ENCODE measurements at regions of chr19 and their contacts with region 1.

Region 1: DNA sequence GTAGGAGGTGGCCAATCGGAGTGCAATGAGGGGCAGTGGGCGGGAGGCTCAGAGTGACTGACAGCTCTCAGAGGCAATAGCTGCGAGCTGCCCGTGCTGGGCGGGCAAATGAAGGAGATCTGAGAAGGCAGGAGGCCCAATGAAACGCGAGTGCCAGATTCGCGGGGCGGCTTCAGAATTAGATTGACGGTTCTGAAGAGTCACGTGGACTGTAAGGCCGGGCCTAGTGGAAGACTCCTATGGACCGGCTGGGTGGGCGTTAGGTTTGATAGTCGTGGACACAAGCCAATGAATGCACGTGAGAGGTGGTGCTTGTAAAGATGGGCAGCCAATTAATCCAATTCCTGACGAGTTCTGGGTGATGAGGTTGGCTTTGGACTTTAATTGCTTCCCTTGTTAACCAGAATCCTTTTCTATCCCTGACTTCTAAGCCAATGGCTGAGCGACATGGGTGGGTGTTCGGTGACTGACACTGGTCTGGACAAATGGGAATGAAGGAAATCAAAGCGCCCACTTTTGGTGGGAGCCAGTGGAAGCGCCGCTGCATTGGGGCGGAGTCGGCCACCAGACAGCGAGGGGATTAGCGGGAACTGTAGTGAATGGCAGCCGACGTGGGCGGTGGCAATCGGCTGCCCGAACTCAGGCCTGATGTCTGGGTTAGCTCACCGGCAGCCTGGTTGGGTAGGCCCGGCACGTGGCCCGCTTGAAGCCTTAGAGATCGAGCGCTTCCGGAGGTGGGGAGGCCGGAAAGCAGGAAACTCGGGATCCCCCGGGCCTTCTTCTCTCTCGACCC is 524 bp upstream of the KHSRP start:
- DNase-seq: peak; percentile 99 to 100
- H3K4me3 ChIP-seq: peak overlapping the region; percentile 23
- H3K4me3 Mint-ChIP-seq: peak overlapping the region; percentile 77
- H3K27ac Mint-ChIP-seq: peak overlapping the region; percentile 95
- H3K4me1 ChIP-seq: peaks cover 20% of the 10 kb centered on the region
- H3K4me1 Mint-ChIP-seq: peaks cover 6% of the 10 kb centered on the region
- H3K27me3 ChIP-seq: no peaks in the 10 kb centered on the region
- H3K27me3 Mint-ChIP-seq: no peaks in the 10 kb centered on the region
- CTCF ChIP-seq: no peak

Region 2: DNA sequence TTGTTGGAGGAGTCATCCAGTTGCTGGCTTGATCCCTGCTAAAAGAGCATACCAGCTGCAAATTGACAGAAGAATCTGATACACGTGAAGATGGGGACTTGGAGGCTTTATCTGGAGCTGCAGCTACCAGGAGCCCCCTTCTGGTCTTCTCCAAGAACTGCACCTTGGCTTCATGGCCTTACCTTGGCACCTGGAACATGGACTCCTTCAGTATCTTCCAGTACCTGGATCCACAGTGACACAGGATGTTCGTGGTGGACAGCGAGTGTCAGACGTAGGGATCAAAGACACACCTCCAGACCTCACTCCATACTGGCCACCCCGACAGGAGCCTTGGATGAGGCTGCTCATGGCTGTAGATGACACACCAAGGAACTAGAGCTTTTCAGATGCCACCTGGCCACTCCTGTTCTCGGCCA is 299.6 kb before region 1 on chr19:
- CTCF ChIA-PET with region 1: interaction called, 5 read pairs
- POLR2A ChIA-PET with region 1: interaction called, 17 read pairs
- intact Hi-C with region 1: no loop called
- DNase-seq: peak; percentile 74 to 76
- H3K4me3 ChIP-seq: no peak overlapping the region
- H3K4me3 Mint-ChIP-seq: no peak overlapping the region
- H3K27ac Mint-ChIP-seq: no peak overlapping the region
- H3K4me1 ChIP-seq: no peaks in the 10 kb centered on the region
- H3K4me1 Mint-ChIP-seq: no peaks in the 10 kb centered on the region
- H3K27me3 ChIP-seq: no peaks in the 10 kb centered on the region
- H3K27me3 Mint-ChIP-seq: no peaks in the 10 kb centered on the region
- CTCF ChIP-seq: peak; percentile 90 to 92

Region 3: GRCh38 chr19:6340493-6341201 is 84.5 kb before region 1 on chr19:
- CTCF ChIA-PET with region 1: no interaction called
- POLR2A ChIA-PET with region 1: no interaction called
- intact Hi-C with region 1: no loop called
- DNase-seq: no peak
- H3K4me3 ChIP-seq: no peak overlapping the region
- H3K4me3 Mint-ChIP-seq: no peak overlapping the region
- H3K27ac Mint-ChIP-seq: no peak overlapping the region
- H3K4me1 ChIP-seq: no peaks in the 10 kb centered on the region
- H3K4me1 Mint-ChIP-seq: no peaks in the 10 kb centered on the region
- H3K27me3 ChIP-seq: no peaks in the 10 kb centered on the region
- H3K27me3 Mint-ChIP-seq: peaks cover 2% of the 10 kb centered on the region
- CTCF ChIP-seq: peak in 1 of 2 experiments; percentile 32

Region 4: DNA sequence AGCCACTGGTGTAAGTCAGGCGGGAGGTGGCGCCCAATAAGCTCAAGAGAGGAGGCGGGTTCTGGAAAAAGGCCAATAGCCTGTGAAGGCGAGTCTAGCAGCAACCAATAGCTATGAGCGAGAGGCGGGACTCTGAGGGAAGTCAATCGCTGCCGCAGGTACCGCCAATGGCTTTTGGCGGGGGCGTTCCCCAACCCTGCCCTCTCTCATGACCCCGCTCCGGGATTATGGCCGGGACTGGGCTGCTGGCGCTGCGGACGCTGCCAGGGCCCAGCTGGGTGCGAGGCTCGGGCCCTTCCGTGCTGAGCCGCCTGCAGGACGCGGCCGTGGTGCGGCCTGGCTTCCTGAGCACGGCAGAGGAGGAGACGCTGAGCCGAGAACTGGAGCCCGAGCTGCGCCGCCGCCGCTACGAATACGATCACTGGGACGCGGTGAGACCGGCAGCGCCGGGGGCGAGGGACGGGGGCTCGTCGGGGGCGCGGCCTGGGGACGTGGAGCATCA is 52.5 kb before region 1 on chr19 and contains the start of gene ALKBH7:
- CTCF ChIA-PET with region 1: interaction called, 4 read pairs
- POLR2A ChIA-PET with region 1: interaction called, 27 read pairs
- intact Hi-C with region 1: loop called (anchors 1 kb)
- DNase-seq: peak; percentile 97 to 99
- H3K4me3 ChIP-seq: peak within 1 kb of the TSS; percentile 97
- H3K4me3 Mint-ChIP-seq: peak within 1 kb of the TSS; percentile 96
- H3K27ac Mint-ChIP-seq: peak within 1 kb of the TSS; percentile 99
- H3K4me1 ChIP-seq: peaks cover 17% of the 10 kb centered on the region
- H3K4me1 Mint-ChIP-seq: peaks cover 6% of the 10 kb centered on the region
- H3K27me3 ChIP-seq: no peaks in the 10 kb centered on the region
- H3K27me3 Mint-ChIP-seq: no peaks in the 10 kb centered on the region
- CTCF ChIP-seq: no peak
- total RNA-seq, gene ALKBH7: 55.5 and 70.0 TPM in 2 replicates

Region 5: DNA sequence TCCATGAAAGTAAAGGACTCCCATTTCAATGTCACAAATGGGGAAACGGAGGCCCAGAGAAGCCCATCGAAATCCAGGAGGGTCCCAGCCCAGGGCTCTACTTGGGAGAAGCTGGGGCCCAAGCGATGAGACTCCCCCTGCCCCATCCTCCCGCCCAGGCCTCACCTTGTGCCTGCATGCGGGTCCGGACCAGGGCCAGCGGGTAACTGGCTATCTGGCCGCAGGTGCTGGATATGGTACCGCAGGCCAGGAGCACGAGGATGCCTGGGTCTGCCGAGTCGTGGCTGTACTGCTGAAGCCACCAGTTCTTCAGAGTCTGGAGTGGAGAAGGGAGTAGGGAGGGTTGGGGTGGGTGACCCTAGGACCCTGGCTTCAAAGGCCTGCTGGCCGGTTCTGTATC is 18.9 kb after region 1 on chr19:
- CTCF ChIA-PET with region 1: no interaction called
- POLR2A ChIA-PET with region 1: no interaction called
- intact Hi-C with region 1: no loop called
- DNase-seq: no peak
- H3K4me3 ChIP-seq: no peak overlapping the region
- H3K4me3 Mint-ChIP-seq: no peak overlapping the region
- H3K27ac Mint-ChIP-seq: no peak overlapping the region
- H3K4me1 ChIP-seq: no peaks in the 10 kb centered on the region
- H3K4me1 Mint-ChIP-seq: no peaks in the 10 kb centered on the region
- H3K27me3 ChIP-seq: no peaks in the 10 kb centered on the region
- H3K27me3 Mint-ChIP-seq: no peaks in the 10 kb centered on the region
- CTCF ChIP-seq: no peak

Region 6: DNA sequence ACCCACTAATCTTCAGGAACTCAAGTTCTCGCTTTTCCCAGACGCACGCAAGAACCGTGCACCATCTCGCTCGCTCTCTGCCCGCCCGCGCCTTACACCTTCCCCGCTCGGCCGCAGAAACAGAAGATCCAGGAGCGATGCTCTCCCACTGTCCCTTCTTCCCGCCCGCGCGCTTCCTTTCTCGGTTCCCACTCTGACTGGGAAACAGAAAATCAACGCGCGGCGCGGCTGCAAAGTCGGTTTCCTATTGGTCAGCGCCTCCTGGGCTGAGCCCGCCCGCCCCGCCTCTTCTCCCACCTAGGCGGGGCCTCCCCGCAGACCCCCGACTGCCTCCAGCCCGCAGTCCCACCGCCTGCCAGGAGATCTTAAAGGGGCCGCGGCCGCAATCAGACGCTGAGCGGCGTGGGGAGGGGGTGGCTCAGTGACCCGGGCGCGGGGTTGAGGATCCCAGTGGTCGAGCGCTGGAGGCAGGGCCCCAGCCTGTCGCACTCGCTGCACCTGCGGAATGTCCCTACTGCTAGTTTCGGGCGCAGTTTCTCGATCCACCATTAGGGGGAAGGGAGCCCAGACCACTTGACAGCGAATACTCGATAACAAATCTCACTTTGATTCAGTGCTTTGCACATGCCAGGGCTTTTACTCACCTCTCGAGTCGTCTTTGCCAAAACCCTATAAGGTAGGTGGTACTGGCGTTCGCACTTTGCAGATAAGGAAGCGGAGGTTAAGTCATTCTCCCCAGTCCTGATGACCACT is 35.1 kb after region 1 on chr19:
- CTCF ChIA-PET with region 1: interaction called, 3 read pairs
- POLR2A ChIA-PET with region 1: interaction called, 9 read pairs
- intact Hi-C with region 1: loop called (anchors 2 kb)
- DNase-seq: peak; percentile 98
- H3K4me3 ChIP-seq: peak overlapping the region; percentile 50
- H3K4me3 Mint-ChIP-seq: peak overlapping the region; percentile 86
- H3K27ac Mint-ChIP-seq: peak overlapping the region; percentile 87
- H3K4me1 ChIP-seq: no peaks in the 10 kb centered on the region
- H3K4me1 Mint-ChIP-seq: peaks cover 15% of the 10 kb centered on the region
- H3K27me3 ChIP-seq: no peaks in the 10 kb centered on the region
- H3K27me3 Mint-ChIP-seq: no peaks in the 10 kb centered on the region
- CTCF ChIP-seq: peak; percentile 55 to 65